Calu3 (cell line): ENCODE measurements at regions of chr15 and their contacts with region 1.

Region 1: DNA sequence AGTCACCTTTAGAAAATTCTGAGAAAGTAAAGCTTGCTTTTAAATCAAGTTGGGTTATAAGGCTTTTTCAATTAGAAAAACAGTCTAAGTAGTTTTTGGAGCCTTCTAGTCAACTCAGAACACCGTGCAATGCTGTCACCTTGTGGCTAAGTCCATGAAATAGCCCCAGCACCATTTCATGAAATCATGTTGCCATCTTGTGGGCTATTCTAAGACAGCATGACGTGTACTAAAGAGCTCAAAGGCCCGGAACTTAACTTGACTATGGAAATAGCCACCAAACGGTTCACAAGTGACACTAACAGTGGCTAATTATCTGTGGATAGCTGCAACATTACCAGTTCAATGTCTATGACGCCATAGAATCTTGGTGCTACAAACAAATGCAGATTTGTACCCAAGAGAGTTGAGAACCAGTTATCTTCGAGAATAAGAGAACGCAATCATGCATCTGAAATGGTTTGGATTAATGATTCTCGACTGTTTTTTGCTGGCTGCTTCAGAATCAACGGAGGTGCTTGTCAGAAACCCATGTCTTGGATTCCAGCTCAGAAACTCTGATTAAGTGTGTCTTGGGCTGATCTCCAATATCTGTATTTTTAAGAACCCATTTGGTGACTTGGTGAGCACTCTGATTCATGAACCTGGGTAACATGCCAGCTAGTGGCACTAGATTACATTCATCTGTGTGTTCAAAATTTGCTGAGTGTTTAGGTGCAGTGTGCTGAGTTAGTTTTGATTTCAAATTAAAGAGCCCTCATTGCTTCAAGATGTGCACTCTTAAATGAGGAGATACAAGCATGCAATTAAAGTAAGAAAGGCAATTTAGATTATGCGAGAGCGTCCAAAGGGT is 111.2 kb upstream of the MCTP2 start:
- DNase-seq: peak; percentile 69
- H3K4me3 Mint-ChIP-seq: no peak overlapping the region
- H3K27ac Mint-ChIP-seq: no peak overlapping the region
- H3K4me1 Mint-ChIP-seq: no peaks in the 10 kb centered on the region
- H3K27me3 Mint-ChIP-seq: peaks cover 37% of the 10 kb centered on the region
- CTCF ChIP-seq: peak; percentile 84

Region 2: DNA sequence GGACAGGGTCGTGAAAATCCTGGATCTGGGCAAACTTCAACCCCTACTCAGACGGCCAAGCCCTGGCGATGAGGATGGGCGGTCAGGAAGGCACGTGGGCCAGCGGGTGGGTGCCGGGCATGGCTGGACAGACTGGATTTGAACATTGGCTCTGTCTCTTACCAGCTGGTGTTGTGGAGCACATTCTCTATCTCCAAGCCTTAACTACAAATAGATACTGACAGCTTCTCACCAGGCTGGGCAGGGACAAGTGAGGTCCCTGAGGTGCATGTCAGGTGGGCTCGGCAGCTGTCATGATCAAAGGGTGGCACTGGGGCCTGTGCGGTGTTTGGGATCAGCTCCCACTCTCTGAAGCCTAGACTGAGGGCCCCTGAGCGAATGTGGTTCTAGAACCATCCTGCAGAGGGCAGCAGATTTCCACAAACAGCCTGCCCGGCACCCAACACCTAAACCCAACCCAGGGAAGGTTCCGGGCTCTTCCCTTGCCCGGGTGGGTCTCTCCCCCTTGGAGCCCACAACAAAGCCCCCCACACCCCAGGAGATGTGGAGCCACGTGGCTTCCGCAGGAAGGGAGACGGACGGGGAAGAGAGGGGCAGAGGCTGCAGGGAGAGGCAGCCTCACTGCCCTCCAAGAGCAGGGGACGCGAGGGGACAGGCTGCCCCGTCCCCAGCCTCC is 1089.6 kb before region 1 on chr15:
- CTCF ChIA-PET with region 1: interaction called, 75 read pairs
- intact Hi-C with region 1: loop called (anchors 1 kb)
- DNase-seq: peak; percentile 78
- H3K4me3 Mint-ChIP-seq: no peak overlapping the region
- H3K27ac Mint-ChIP-seq: peak overlapping the region; percentile 35
- H3K4me1 Mint-ChIP-seq: peaks cover 23% of the 10 kb centered on the region
- H3K27me3 Mint-ChIP-seq: no peaks in the 10 kb centered on the region
- CTCF ChIP-seq: peak; percentile 85

Region 3: GRCh38 chr15:93035953-93036800 is 1084.0 kb before region 1 on chr15:
- CTCF ChIA-PET with region 1: interaction called, 75 read pairs
- intact Hi-C with region 1: no loop called
- DNase-seq: peak; percentile 63
- H3K4me3 Mint-ChIP-seq: no peak overlapping the region
- H3K27ac Mint-ChIP-seq: no peak overlapping the region
- H3K4me1 Mint-ChIP-seq: peaks cover 5% of the 10 kb centered on the region
- H3K27me3 Mint-ChIP-seq: peaks cover 18% of the 10 kb centered on the region
- CTCF ChIP-seq: peak; percentile 81

Region 4: DNA sequence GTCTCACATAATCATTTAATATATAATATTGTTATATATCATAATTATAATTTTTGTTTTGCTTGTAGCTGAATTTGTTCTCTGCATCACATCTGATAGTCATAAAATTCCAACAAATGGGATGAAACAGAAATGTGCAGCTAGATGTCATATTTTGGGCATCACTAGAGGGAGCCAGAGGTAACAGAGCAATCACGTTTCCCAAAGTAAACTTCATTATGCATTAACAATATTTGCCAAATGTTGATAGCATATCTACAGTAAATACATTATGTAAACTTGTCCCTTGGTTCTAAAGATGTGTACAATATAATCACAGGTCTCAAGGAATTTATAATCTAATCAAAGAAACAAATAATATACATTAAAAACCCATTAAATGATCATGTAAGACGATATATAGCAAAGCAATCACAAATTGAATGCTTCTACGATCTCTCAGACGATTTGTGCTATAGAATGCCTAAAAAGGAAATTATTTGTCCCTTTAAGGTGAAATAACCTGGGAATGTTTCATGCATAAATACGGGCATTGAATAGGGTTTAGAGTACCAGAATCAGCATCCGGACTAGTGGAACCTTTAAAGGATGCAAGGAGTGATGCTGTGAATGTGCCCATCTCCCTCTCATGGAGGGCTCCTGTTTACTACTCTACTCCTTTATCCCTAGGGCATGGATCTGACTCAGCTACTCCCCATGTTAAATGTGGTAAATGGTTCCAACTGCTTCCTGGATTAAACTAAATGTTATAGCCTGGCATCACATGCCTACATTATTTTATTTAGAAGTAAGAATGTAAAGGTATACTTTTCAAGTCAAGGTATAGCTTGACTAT is 122.8 kb before region 1 on chr15:
- CTCF ChIA-PET with region 1: interaction called, 19 read pairs
- intact Hi-C with region 1: loop called (anchors 1 kb)
- DNase-seq: peak; percentile 26
- H3K4me3 Mint-ChIP-seq: no peak overlapping the region
- H3K27ac Mint-ChIP-seq: no peak overlapping the region
- H3K4me1 Mint-ChIP-seq: no peaks in the 10 kb centered on the region
- H3K27me3 Mint-ChIP-seq: no peaks in the 10 kb centered on the region
- CTCF ChIP-seq: peak; percentile 42

Region 5: DNA sequence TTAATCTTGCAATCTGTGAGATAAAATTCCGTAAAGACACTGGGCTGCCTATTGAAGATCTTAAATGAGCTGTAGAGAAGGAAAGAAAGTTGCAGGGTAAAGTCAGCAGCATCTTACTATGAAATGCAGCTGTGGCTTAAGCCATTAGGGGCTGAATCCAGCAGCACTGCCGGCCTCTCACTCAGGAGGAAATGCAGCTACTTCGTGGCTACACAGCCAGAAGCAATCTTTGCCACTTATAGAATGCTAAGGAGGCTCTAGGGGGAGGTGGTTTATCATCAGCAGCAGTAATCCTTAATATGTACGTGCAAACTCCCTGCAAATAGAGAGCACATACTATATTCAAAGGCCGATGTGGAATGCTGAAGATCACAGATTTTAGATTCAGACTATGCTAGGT is 92.1 kb after region 1 on chr15:
- CTCF ChIA-PET with region 1: no interaction called
- intact Hi-C with region 1: no loop called
- DNase-seq: no peak
- H3K4me3 Mint-ChIP-seq: no peak overlapping the region
- H3K27ac Mint-ChIP-seq: no peak overlapping the region
- H3K4me1 Mint-ChIP-seq: no peaks in the 10 kb centered on the region
- H3K27me3 Mint-ChIP-seq: peaks cover 12% of the 10 kb centered on the region
- CTCF ChIP-seq: no peak